Activated CD8-positive, alpha-beta T cell treated with anti-CD3 and anti-CD28 coated beads, Interleukin-2, amount 10 ng/mL, durations not matched to agents 7 days and 5 days (primary cell): ENCODE measurements at regions of chr17 and their contacts with region 1.

Region 1: GRCh38 chr17:21275579-21276263 is 8.8 kb upstream of the MAP2K3 start:
- DNase-seq: peak; percentile 95
- ATAC-seq: peak; percentile 93
- H3K4me3 Mint-ChIP-seq: peak overlapping the region; percentile 72
- H3K27ac Mint-ChIP-seq: peak overlapping the region; percentile 73
- H3K4me1 Mint-ChIP-seq: peaks cover 46% of the 10 kb centered on the region
- H3K27me3 Mint-ChIP-seq: no peaks in the 10 kb centered on the region

Region 2: DNA sequence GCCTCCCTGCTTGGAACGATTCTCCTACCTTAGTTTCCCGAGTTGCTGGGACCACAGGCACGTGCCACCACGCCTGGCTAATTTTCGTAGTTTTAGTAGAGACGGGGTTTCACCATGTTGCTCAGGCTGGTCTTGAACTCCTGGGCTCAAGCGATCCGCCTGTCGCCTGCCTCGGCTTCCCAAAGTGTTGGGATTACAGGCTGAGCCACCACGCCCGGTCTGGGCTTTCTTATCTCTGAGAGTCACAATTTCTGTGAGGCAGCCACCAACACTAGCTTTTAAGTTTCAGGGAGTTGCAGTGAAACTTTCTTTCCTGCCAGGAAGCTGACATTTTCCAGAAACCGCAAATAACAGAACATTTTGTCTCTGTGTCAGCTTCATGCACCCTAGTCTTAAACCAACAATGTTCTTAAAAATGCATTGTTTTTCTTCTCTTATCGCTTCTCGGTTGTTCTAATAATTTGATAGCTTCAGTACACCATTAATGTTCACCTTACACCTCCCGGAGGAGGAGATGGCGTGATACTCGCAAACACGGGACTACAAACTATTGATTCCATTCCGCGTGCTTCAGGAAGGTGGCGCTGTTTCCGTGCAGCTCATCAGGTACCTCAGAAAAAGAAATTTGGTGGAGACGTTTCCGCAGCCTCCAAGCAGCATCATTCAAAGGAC is 156.3 kb before region 1 on chr17:
- CTCF ChIA-PET with region 1: interaction called, 14 read pairs
- POLR2A ChIA-PET with region 1: no interaction called
- DNase-seq: peak; percentile 81
- ATAC-seq: peak; percentile 84
- H3K4me3 Mint-ChIP-seq: no peak overlapping the region
- H3K27ac Mint-ChIP-seq: no peak overlapping the region
- H3K4me1 Mint-ChIP-seq: peaks cover 11% of the 10 kb centered on the region
- H3K27me3 Mint-ChIP-seq: peaks cover 8% of the 10 kb centered on the region

Region 3: GRCh38 chr17:21249920-21250703 is 25.6 kb before region 1 on chr17:
- CTCF ChIA-PET with region 1: interaction called, 12 read pairs
- POLR2A ChIA-PET with region 1: interaction called, 4 read pairs
- DNase-seq: no peak
- ATAC-seq: no peak
- H3K4me3 Mint-ChIP-seq: no peak overlapping the region
- H3K27ac Mint-ChIP-seq: no peak overlapping the region
- H3K4me1 Mint-ChIP-seq: peaks cover 12% of the 10 kb centered on the region
- H3K27me3 Mint-ChIP-seq: peaks cover 8% of the 10 kb centered on the region

Region 4: GRCh38 chr17:21263351-21263750 is 12.4 kb before region 1 on chr17:
- CTCF ChIA-PET with region 1: interaction called, 10 read pairs
- POLR2A ChIA-PET with region 1: interaction called, 4 read pairs
- DNase-seq: no peak
- ATAC-seq: no peak
- H3K4me3 Mint-ChIP-seq: no peak overlapping the region
- H3K27ac Mint-ChIP-seq: no peak overlapping the region
- H3K4me1 Mint-ChIP-seq: peaks cover 17% of the 10 kb centered on the region
- H3K27me3 Mint-ChIP-seq: no peaks in the 10 kb centered on the region

Region 5: DNA sequence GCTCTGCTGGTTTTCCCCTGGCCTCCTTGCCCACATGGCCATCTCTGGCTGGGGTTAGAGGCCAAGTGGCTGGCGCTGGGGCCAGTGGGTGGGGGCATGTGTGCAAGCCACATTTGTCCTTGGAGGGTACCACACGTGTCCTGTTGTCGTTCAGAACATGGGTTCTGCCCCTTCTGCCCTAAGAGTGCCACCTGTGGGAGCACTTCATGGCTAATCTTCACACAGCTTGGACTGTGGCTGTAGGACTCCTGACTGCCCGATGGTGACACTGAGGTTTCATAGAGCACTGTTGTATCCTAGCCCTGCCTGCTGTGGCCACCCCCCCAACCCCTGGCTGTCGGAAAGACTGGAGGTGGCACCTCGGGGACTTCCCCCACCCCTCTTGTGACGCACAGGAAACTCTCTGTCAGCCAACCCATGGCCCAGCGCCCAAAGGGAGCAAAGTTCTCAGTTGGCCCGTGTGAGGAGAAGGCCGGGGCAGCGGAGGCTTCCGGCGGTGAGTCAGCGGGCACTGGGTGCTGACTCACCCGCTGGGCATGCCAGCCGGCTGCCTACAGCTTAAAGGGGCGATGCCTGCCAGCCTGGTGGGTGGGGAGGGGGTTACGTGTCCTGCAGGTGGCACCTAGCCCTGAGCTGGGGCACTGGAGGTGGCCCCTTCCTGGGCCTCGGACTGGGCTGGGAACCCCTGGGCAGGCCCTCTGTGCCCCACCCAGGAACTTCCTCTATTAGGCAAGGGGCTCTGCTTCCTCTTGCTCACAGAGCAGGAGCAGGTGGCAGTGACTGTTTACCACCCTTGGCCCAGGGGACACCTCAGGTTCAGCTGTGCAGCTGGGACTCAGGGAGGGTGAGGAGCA is 12.1 kb after region 1 on chr17:
- CTCF ChIA-PET with region 1: interaction called, 20 read pairs
- POLR2A ChIA-PET with region 1: interaction called, 13 read pairs
- DNase-seq: peak; percentile 95
- ATAC-seq: peak; percentile 62
- H3K4me3 Mint-ChIP-seq: peak overlapping the region; percentile 90
- H3K27ac Mint-ChIP-seq: peak overlapping the region; percentile 94
- H3K4me1 Mint-ChIP-seq: peaks cover 43% of the 10 kb centered on the region
- H3K27me3 Mint-ChIP-seq: no peaks in the 10 kb centered on the region

Region 6: GRCh38 chr17:21511363-21512198 is 235.9 kb after region 1 on chr17:
- CTCF ChIA-PET with region 1: interaction called, 33 read pairs
- POLR2A ChIA-PET with region 1: no interaction called
- DNase-seq: peak; percentile 73
- ATAC-seq: peak; percentile 84
- H3K4me3 Mint-ChIP-seq: peak overlapping the region; percentile 61
- H3K27ac Mint-ChIP-seq: no peak overlapping the region
- H3K4me1 Mint-ChIP-seq: peaks cover 24% of the 10 kb centered on the region
- H3K27me3 Mint-ChIP-seq: peaks cover 45% of the 10 kb centered on the region